ENCODE measurements at regions of chr6 and their contacts with region 1.

Region 1: GRCh38 chr6:163427498-163428254 is 13.2 kb downstream of the QKI start:
- DNase-seq: peak; percentile 81
- H3K4me3 Mint-ChIP-seq: peak overlapping the region; percentile 43
- H3K27ac Mint-ChIP-seq: peak overlapping the region; percentile 17
- H3K4me1 Mint-ChIP-seq: peaks cover 48% of the 10 kb centered on the region
- H3K27me3 Mint-ChIP-seq: no peaks in the 10 kb centered on the region
- CTCF ChIP-seq: peak; percentile 50

Region 2: DNA sequence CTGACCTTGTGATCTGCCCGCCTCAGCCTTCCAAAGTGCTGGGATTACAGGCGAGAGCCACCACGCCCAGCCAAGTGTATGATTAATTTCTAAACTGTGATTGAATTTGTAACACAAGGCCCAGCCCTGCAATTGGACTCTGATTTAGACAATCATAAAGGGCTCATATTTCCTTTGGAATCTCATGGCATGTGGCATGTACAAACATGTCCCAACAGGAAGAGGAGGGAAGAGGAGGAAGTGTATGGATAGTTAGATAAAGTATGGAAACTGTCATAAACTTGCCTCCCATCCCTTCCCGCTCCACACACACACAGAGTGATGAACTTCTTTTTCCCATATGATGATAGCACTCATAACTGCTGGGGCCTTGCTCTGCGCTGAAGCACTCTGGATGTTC is 40.4 kb before region 1 on chr6:
- CTCF ChIA-PET with region 1: no interaction called
- POLR2A ChIA-PET with region 1: no interaction called
- intact Hi-C with region 1: no loop called
- DNase-seq: peak; percentile 67
- H3K4me3 Mint-ChIP-seq: no peak overlapping the region
- H3K27ac Mint-ChIP-seq: peak overlapping the region; percentile 85
- H3K4me1 Mint-ChIP-seq: peaks cover 15% of the 10 kb centered on the region
- H3K27me3 Mint-ChIP-seq: no peaks in the 10 kb centered on the region
- CTCF ChIP-seq: no peak

Region 3: GRCh38 chr6:163554663-163555062 is 127.0 kb after region 1 on chr6:
- CTCF ChIA-PET with region 1: no interaction called
- POLR2A ChIA-PET with region 1: no interaction called
- intact Hi-C with region 1: loop called (anchors 2 kb)
- DNase-seq: peak; percentile 66
- H3K4me3 Mint-ChIP-seq: no peak overlapping the region
- H3K27ac Mint-ChIP-seq: no peak overlapping the region
- H3K4me1 Mint-ChIP-seq: peaks cover 17% of the 10 kb centered on the region
- H3K27me3 Mint-ChIP-seq: no peaks in the 10 kb centered on the region
- CTCF ChIP-seq: peak; percentile 40

Region 4: GRCh38 chr6:163793011-163793983 is 365.6 kb after region 1 on chr6:
- CTCF ChIA-PET with region 1: no interaction called
- POLR2A ChIA-PET with region 1: no interaction called
- intact Hi-C with region 1: loop called (anchors 10 kb)
- DNase-seq: peak; percentile 86
- H3K4me3 Mint-ChIP-seq: peak overlapping the region; percentile 11
- H3K27ac Mint-ChIP-seq: peak overlapping the region; percentile 37
- H3K4me1 Mint-ChIP-seq: peaks cover 35% of the 10 kb centered on the region
- H3K27me3 Mint-ChIP-seq: no peaks in the 10 kb centered on the region
- CTCF ChIP-seq: no peak

Region 5: DNA sequence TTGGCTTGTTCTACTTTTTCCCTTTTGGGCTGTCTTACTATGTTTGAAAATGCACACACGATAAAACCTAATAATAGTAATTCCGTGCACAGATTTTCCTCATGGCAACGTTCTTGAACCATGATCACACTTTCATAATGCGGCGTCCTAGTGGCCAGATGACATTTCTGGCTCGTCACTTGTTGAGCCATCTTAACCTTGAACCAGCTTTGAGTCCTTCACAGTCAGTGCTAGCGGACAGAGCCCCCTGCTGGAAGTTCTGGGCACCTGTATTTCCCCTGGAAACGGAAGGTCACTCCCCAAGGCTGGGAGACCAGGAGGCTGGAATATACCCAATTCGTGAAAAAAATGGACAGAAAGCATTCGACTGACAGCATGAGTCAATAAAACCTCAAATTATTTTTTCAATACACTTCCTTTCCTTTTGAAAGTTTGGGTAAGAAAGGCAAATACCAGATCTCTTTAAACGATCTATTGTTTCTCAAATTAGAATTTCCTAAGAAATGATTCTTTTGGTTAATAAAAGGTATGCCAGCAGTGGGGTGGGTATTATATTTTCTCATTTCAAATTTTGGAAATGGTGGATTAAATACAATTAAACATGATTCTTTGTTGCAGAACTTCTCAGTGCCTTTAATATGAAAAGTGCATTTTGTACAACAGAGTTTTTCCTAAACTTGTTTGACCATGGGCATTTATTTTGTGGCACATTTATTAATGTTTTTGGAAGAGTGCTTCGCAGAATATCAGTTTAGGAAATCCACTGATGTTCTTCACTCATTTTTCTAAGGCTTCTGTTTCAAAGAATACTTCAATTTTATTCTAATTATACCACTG is 529.1 kb after region 1 on chr6:
- CTCF ChIA-PET with region 1: interaction called, 8 read pairs
- POLR2A ChIA-PET with region 1: no interaction called
- intact Hi-C with region 1: loop called (anchors 1 kb)
- DNase-seq: peak; percentile 86
- H3K4me3 Mint-ChIP-seq: no peak overlapping the region
- H3K27ac Mint-ChIP-seq: no peak overlapping the region
- H3K4me1 Mint-ChIP-seq: peaks cover 11% of the 10 kb centered on the region
- H3K27me3 Mint-ChIP-seq: no peaks in the 10 kb centered on the region
- CTCF ChIP-seq: peak; percentile 79

Region 6: GRCh38 chr6:164106345-164106769 is 678.7 kb after region 1 on chr6:
- CTCF ChIA-PET with region 1: interaction called, 4 read pairs
- POLR2A ChIA-PET with region 1: interaction called, 4 read pairs
- intact Hi-C with region 1: loop called (anchors 2 kb)
- DNase-seq: peak; percentile 37
- H3K4me3 Mint-ChIP-seq: no peak overlapping the region
- H3K27ac Mint-ChIP-seq: peak overlapping the region; percentile 97
- H3K4me1 Mint-ChIP-seq: peaks cover 43% of the 10 kb centered on the region
- H3K27me3 Mint-ChIP-seq: no peaks in the 10 kb centered on the region
- CTCF ChIP-seq: no peak

Region 7: GRCh38 chr6:164612751-164613150 is 1185.1 kb after region 1 on chr6:
- CTCF ChIA-PET with region 1: no interaction called
- POLR2A ChIA-PET with region 1: no interaction called
- intact Hi-C with region 1: loop called (anchors 5 kb)
- DNase-seq: no peak
- H3K4me3 Mint-ChIP-seq: no peak overlapping the region
- H3K27ac Mint-ChIP-seq: no peak overlapping the region
- H3K4me1 Mint-ChIP-seq: peaks cover 2% of the 10 kb centered on the region
- H3K27me3 Mint-ChIP-seq: no peaks in the 10 kb centered on the region
- CTCF ChIP-seq: no peak

Region 8: DNA sequence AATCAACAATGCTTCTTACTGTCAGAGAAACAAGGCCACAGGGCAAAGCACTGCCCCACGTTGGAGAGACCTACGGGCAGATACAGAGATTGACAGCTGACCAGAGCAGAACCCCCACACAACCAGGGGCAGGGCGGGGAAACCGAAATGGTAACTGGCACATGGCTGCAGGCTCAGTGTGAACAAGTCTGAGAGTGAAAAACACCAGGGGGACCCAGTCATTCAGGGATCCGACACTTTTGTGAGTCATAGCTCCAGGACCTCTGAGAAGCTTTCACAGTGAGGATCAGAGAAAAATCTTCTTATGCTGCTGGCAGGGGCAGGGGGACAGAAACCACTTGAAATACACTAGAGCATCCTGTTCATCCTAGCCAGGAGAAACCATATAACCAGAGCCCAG is 1627.6 kb after region 1 on chr6:
- CTCF ChIA-PET with region 1: no interaction called
- POLR2A ChIA-PET with region 1: no interaction called
- intact Hi-C with region 1: loop called (anchors 10 kb)
- DNase-seq: peak; percentile 69
- H3K4me3 Mint-ChIP-seq: no peak overlapping the region
- H3K27ac Mint-ChIP-seq: peak overlapping the region; percentile 12
- H3K4me1 Mint-ChIP-seq: peaks cover 22% of the 10 kb centered on the region
- H3K27me3 Mint-ChIP-seq: no peaks in the 10 kb centered on the region
- CTCF ChIP-seq: peak; percentile 16

Measured in MCF 10A (cell line).